Mammary epithelial cell (primary cell): ENCODE measurements at regions of chr15 and their contacts with region 1.

Region 1: GRCh38 chr15:45611305-45611704 is 23.5 kb upstream of the SQOR start:
- DNase-seq: no peak
- H3K4me3 ChIP-seq: no peak overlapping the region
- H3K27ac ChIP-seq: no peak overlapping the region
- H3K4me1 ChIP-seq: peaks cover 4% of the 10 kb centered on the region
- H3K27me3 ChIP-seq: no peaks in the 10 kb centered on the region
- CTCF ChIP-seq: peak; percentile 39

Region 2: DNA sequence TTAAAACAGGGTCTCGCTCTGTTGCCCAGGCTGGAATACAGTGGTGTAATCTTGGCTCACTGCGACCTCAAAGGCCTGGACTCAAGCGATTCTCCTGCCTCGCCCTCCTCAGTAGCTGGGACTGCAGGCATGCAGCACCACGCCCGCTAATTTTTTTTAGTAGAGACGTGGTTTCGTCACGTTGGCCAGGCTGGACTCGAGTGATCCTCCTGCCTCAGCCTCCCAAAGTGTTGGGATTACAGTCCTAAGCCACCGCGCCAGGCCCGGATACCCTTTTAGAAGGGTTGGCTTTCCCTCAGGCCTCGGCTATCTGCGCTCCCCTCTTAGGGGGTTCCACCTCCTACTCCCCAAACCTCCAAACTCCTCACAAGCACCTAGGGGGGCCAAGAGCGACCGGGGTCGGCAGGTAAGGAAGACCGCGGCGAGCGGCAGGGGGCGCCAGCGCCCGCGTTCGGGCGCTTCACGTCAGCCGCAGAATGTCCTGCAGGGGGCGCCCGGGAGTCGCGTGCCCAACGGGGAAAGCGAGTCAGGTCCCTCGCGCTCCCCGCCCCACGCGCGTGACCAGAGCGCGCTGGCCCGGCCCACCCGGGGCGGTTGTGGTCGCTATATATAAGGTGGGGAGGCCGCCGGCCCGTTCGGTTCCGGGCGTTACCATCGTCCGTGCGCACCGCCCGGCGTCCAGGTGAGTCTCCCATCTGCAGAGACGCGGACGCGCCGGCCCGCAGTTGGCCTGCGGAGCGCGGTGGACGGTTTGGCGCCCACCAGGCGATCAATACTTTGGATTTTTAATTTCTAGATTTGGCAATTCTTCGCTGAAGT is 181.1 kb before region 1 on chr15:
- CTCF ChIA-PET with region 1: no interaction called
- dilution Hi-C with region 1: no loop called
- in situ Hi-C with region 1: no loop called
- intact Hi-C with region 1: loop called (anchors 1 kb)
- DNase-seq: peak; percentile 39
- H3K4me3 ChIP-seq: peak overlapping the region in 2 of 3 experiments; percentile 36 to 42
- H3K27ac ChIP-seq: no peak overlapping the region
- H3K4me1 ChIP-seq: peaks cover 4% of the 10 kb centered on the region
- H3K27me3 ChIP-seq: no peaks in the 10 kb centered on the region
- CTCF ChIP-seq: peak; percentile 87 to 100

Region 3: DNA sequence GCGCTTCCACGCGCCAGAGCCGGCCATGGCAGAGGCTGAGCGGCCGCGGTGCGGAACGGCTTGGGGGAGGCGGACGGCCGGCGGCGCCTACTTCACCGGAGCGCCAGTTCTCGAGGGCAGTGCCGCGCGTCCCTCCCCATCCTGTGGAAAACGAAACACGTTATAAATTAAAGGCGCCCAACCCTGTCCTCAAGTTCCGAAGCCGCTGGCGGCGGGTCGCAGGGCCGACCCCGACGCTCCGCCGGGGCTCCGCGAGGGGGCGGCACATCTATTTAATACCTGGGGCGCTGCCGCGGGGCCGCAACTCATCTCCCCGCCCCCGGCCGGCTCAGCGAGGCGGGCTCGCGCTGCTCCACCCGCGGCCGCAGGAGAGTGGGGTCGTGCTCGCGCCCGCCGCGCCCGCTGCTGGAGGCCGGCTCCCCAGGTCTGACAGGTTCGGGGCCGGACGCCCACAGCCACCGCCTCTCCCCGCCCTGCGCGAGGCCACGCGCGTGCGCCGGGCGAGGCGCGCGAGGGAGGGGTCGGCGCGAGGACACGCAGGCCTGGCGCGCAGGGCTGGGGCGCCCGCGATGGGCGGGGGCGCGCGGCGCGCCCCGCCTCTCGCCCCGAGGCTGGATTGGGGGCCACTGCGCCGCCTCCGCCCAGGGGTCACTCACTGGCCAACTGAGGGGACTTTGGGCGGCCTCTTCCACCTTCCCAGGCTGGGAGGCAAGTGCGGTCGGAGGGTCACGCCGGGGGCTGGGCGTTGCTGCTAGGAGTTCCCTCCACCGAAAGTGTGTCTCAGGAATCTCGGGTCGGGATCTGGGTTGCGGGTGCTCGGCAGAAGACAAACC is 88.8 kb before region 1 on chr15 and contains the start of gene SLC30A4:
- CTCF ChIA-PET with region 1: no interaction called
- dilution Hi-C with region 1: no loop called
- in situ Hi-C with region 1: no loop called
- intact Hi-C with region 1: loop called (anchors 5 kb)
- DNase-seq: peak; percentile 49
- H3K4me3 ChIP-seq: peak within 1 kb of the TSS; percentile 40 to 85 (median 66)
- H3K27ac ChIP-seq: peak within 1 kb of the TSS; percentile 22
- H3K4me1 ChIP-seq: peaks cover 19% of the 10 kb centered on the region
- H3K27me3 ChIP-seq: no peaks in the 10 kb centered on the region
- CTCF ChIP-seq: peak in 1 of 2 donors; percentile 38
- total RNA-seq, gene SLC30A4: 6.8 to 11.2 TPM

Region 4: GRCh38 chr15:45634442-45635190 is 23.3 kb after region 1 on chr15 and contains the start of gene SQOR:
- CTCF ChIA-PET with region 1: no interaction called
- dilution Hi-C with region 1: no loop called
- in situ Hi-C with region 1: no loop called
- intact Hi-C with region 1: loop called (anchors 1 kb)
- DNase-seq: peak; percentile 92
- H3K4me3 ChIP-seq: peak within 1 kb of the TSS; percentile 65 to 79 (median 71)
- H3K27ac ChIP-seq: peak within 1 kb of the TSS; percentile 78
- H3K4me1 ChIP-seq: peaks cover 52% of the 10 kb centered on the region
- H3K27me3 ChIP-seq: no peaks in the 10 kb centered on the region
- CTCF ChIP-seq: no peak
- total RNA-seq, gene SQOR: 65.7 to 125 TPM